Lower leg skin (tissue), 4 donors: ENCODE measurements at regions of chr13 and their contacts with region 1.

Region 1: DNA sequence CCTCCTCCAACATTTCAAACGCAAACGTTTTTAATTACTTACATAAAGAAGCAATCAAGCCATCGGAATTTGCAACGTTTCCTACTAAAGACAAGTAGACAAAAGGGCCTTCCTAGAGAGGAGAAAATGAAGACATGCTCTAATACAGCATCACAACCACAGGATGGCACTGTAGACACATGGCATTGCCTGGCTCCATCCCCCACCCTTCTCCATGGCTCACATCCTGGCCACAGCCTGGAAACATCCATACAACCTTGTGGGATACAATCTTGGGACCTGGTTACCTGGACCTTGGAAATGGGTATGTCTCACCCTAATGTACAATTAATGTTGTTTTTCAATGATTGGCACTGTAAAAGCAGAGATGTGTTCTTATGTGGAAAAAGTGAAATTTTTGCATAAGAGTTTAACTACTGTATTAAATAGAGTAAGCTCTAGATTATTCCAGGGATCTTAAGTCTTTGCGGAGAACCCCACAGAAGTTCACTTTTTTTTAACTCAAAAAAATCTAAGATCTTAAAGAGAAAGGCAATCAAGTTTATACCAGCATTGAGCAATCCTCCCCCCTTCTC is 21.5 kb downstream of the EBPL start:
- DNase-seq: no peak
- H3K4me3 ChIP-seq: no peak overlapping the region
- CTCF ChIP-seq: no peak
- POLR2A ChIP-seq: no peak

Region 2: DNA sequence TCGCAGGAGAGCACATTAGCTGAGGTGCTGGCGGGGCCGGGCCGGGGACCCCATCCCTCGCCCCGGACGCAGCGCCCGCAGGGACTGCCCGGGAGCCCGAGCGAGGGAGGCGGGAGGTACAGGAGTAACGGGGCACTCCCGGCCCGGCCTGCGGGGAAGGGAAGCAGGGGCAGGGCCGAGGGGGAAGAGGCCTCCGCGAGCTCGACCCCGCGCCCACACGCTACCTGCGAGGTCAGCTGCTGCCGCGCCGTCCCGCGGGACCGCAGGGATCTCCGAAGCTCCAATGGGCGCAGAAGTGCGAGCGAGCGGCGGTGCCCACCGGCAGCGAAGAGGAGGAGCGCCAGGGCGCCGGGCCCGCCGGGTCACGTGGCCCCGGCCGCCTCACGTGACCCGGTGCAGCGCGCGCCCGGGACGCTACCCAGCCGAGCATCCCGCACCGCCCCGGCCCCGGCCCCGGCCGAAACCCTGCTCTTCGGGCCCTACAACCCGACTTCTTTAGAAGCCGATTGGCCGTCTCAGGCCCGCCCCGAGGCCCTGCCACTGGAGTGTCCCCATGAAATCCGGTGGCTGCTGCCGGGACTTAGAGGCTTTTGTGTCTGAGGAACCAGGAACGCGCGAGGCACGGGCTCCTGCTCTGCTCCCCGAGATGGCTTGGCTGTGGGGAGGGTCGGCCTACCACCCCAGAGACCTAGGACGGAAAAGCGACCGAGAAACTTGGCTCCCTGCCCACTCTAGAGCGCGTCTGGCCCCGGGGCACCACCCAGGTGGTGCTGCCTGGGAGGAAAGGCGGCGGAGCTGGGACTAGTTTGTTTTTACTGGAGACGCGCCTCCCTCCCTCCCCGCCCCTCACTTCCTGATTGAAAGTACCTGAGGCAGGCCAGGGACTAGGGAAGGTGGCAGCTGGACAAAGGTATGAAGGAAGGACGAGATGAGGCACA is 84.3 kb before region 1 on chr13 and contains the start of gene RCBTB1:
- intact Hi-C with region 1: no loop called
- DNase-seq: peak; percentile 49 to 92
- H3K4me3 ChIP-seq: peak within 1 kb of the TSS; percentile 75
- CTCF ChIP-seq: no peak
- POLR2A ChIP-seq: no peak
- total RNA-seq, gene RCBTB1: 4.4 to 12.8 (median 6.5) TPM

Region 3: DNA sequence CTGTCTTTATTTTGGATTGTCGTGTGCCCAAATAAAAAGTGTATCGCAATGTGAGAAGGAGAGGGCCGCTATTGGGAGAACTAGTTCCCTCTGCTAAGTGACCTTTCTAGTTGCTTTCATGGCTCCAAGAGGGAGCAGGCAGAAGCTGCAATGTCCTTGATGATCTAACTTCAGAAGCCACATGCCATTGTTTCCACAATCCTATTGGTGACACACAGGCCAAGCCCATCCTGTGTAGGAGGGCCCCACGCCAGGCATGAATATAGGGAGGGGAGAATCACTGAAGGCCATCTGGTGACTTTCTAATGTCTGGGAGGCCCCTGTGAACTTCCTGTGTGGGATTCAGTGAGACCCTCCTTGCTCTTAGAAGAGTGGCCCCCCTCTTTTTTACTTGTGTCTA is 170.4 kb after region 1 on chr13:
- intact Hi-C with region 1: loop called (anchors 10 kb)
- DNase-seq: no peak
- H3K4me3 ChIP-seq: no peak overlapping the region
- CTCF ChIP-seq: no peak
- POLR2A ChIP-seq: no peak

Region 4: DNA sequence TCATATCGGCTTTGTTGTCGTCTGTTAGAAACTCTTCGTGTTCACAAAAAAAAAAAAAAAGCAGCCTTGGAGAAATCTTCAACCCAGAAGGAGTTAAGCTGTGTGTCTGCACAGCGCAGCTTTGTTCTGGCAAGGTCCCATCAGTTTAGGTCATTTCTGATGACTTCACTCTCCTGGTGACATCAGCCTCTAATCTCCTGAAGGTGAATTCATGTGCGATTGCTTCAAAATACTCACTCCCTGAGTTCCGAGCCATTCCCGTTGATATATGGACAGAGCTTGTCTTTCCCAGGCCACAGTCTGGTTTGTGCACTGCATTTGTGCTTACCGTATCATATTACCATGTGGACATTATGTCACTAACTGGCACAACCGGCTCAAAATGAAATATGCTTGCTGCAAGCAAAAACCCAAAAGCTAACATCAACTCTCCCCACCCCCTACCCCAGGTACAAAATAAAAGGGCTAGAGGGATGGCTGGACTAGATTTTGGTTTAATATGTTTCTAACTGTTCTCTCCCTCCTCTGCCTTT is 687.8 kb after region 1 on chr13:
- intact Hi-C with region 1: no loop called
- DNase-seq: peak in 1 of 2 donors; percentile 21
- H3K4me3 ChIP-seq: no peak overlapping the region
- CTCF ChIP-seq: no peak
- POLR2A ChIP-seq: no peak